ENCODE measurements at regions of chr11 and their contacts with region 1.

Region 1: GRCh38 chr11:58524232-58525036 is 16.5 kb upstream of the OR5B21 start:
- DNase-seq: peak; percentile 79
- H3K4me3 ChIP-seq: no peak overlapping the region
- CTCF ChIP-seq: peak; percentile 89

Region 2: GRCh38 chr11:57800444-57801182 is 723.8 kb before region 1 on chr11:
- in situ Hi-C with region 1: loop called (anchors 25 kb)
- DNase-seq: peak; percentile 45
- H3K4me3 ChIP-seq: no peak overlapping the region
- CTCF ChIP-seq: peak; percentile 67

Region 3: DNA sequence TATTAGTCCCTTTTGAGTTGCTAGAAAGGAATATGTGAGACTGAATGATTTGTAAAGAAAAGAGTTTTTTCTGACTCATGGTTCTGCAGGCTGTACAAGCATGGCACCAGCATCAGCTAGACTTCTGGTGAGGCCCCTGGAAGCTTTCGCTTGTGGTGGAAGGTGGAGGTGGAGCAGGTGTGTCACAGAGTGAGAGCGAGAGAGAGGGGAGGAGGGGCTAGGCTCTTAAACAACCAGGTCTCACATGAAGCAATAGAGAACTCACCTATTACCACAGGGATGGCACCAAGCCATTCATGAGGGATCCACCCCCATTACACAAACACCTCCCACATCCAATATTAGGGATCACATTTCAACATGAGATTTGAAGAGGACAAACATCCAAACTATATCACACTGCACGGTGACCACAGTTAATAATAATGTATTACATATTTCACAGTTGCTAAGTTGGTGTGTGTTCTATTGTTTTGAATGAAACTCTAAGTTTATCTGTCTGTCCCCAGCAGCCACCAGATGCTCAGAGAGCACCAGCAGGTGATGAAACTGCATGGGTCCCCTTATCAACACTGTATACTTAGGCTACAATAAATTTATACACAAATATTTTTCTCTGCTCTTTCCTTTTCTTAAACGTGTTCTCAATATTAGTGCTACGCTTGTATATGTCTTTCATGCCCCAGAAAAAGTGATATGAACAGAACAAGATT is 68.5 kb after region 1 on chr11:
- in situ Hi-C with region 1: no loop called
- DNase-seq: no peak
- H3K4me3 ChIP-seq: no peak overlapping the region
- CTCF ChIP-seq: no peak